Activated B cell treated with CpG ODN at 0.5 μM for 24 hours (primary cell): ENCODE measurements at regions of chr1 and their contacts with region 1.

Region 1: DNA sequence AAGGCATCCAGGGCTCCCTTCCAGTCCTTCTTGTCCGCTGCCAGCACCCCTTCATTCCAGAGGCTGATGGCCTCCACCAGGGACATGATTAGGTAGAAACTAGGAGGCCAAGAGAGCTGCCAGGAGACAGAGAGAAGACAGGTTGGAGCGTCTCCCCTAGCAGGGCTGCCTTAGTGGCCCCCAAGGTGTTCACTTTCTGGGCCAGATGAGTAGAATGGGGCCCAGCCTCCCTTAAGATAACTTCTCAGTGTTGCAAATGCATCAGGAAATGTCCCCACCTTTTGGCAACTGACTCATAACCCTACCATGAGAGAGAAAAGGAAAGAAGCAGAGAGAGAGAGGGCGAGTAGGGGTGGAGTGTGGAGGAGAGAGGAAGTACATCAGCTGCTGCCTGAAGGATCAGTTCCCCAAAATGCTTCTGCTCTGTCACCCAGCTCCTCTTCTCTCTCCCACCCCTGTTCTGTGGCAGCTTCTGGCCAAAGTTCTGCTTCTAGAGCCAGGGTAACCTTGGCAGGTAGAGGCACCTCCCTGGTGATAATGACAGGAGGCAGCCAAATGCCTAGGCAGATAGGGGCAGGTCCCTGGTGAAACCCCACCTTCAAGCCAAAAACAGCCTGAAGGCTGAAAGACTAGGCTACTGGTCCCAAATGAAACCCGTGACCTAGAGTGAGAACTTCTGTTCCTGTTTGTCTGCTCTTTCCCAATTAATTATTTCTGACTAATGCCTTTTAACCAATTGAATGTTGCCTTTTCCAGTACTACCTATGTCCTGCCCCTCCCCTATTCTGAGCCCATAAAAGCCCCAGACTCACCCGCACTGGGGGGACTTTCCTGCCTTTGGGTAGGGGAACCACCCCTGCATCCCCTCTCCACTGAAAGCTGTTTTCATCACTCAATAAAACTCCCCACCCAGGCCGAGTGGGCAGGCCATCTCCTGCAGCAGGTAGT is at the start of gene NCF2:
- DNase-seq: peak; percentile 55
- ATAC-seq: peak; percentile 78
- H3K4me3 Mint-ChIP-seq: peak within 1 kb of the TSS; percentile 88
- H3K27ac Mint-ChIP-seq: peak within 1 kb of the TSS; percentile 92
- H3K4me1 Mint-ChIP-seq: peaks cover 73% of the 10 kb centered on the region
- H3K27me3 Mint-ChIP-seq: no peaks in the 10 kb centered on the region
- CTCF ChIP-seq: no peak
- total RNA-seq, gene NCF2: 101 TPM in 2 replicates

Region 2: GRCh38 chr1:183567584-183567983 is 22.9 kb before region 1 on chr1:
- CTCF ChIA-PET with region 1: interaction called, 5 read pairs
- POLR2A ChIA-PET with region 1: interaction called, 11 read pairs
- intact Hi-C with region 1: no loop called
- DNase-seq: no peak
- ATAC-seq: peak; percentile 76
- H3K4me3 Mint-ChIP-seq: peak overlapping the region; percentile 42
- H3K27ac Mint-ChIP-seq: peak overlapping the region; percentile 64
- H3K4me1 Mint-ChIP-seq: peaks cover 24% of the 10 kb centered on the region
- H3K27me3 Mint-ChIP-seq: no peaks in the 10 kb centered on the region
- CTCF ChIP-seq: no peak

Region 3: GRCh38 chr1:183604038-183604808 is 13.7 kb after region 1 on chr1:
- CTCF ChIA-PET with region 1: interaction called, 3 read pairs
- POLR2A ChIA-PET with region 1: interaction called, 57 read pairs
- intact Hi-C with region 1: loop called (anchors 1 kb)
- DNase-seq: no peak
- ATAC-seq: peak; percentile 46
- H3K4me3 Mint-ChIP-seq: peak overlapping the region; percentile 36
- H3K27ac Mint-ChIP-seq: peak overlapping the region; percentile 79
- H3K4me1 Mint-ChIP-seq: peaks cover 50% of the 10 kb centered on the region
- H3K27me3 Mint-ChIP-seq: no peaks in the 10 kb centered on the region
- CTCF ChIP-seq: no peak

Region 4: GRCh38 chr1:183622884-183623785 is 32.6 kb after region 1 on chr1:
- CTCF ChIA-PET with region 1: interaction called, 3 read pairs
- POLR2A ChIA-PET with region 1: interaction called, 6 read pairs
- intact Hi-C with region 1: loop called (anchors 1 kb)
- DNase-seq: peak; percentile 20
- ATAC-seq: peak; percentile 94
- H3K4me3 Mint-ChIP-seq: no peak overlapping the region
- H3K27ac Mint-ChIP-seq: peak overlapping the region; percentile 50
- H3K4me1 Mint-ChIP-seq: peaks cover 26% of the 10 kb centered on the region
- H3K27me3 Mint-ChIP-seq: no peaks in the 10 kb centered on the region
- CTCF ChIP-seq: no peak

Region 5: DNA sequence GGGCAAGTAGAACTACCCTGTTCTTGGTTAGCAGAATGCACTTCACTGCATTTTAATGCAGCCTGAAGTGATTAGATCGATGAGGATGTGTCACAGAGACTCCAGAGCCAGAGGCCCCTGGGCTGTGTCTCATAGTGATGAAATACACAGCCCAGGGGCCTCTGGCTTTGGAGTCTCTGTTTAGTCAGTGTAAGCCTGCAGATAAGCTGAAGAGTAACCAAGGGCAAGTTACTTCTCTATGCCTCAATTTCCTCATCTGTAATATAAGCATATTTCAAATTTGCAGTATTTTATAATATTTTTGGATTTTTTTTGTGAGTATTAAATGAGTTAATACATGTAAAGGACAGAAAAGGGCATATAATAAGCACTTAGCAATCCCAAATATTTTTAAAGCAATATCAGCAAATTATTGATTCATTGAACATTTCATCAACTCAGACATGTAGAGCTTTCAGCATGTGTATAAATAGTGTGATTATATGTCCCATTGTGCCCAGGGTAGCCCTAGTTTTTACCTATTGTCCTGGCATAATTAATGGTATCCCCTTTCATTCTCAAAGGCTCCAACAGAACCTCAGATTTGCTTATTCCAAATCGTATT is 86.2 kb after region 1 on chr1:
- CTCF ChIA-PET with region 1: no interaction called
- POLR2A ChIA-PET with region 1: no interaction called
- intact Hi-C with region 1: no loop called
- DNase-seq: no peak
- ATAC-seq: no peak
- H3K4me3 Mint-ChIP-seq: no peak overlapping the region
- H3K27ac Mint-ChIP-seq: no peak overlapping the region
- H3K4me1 Mint-ChIP-seq: no peaks in the 10 kb centered on the region
- H3K27me3 Mint-ChIP-seq: peaks cover 30% of the 10 kb centered on the region
- CTCF ChIP-seq: no peak